Activated CD4-positive, alpha-beta T cell treated with anti-CD3 and anti-CD28 coated beads for 36 hours (primary cell): ENCODE measurements at regions of chr1 and their contacts with region 1.

Region 1: DNA sequence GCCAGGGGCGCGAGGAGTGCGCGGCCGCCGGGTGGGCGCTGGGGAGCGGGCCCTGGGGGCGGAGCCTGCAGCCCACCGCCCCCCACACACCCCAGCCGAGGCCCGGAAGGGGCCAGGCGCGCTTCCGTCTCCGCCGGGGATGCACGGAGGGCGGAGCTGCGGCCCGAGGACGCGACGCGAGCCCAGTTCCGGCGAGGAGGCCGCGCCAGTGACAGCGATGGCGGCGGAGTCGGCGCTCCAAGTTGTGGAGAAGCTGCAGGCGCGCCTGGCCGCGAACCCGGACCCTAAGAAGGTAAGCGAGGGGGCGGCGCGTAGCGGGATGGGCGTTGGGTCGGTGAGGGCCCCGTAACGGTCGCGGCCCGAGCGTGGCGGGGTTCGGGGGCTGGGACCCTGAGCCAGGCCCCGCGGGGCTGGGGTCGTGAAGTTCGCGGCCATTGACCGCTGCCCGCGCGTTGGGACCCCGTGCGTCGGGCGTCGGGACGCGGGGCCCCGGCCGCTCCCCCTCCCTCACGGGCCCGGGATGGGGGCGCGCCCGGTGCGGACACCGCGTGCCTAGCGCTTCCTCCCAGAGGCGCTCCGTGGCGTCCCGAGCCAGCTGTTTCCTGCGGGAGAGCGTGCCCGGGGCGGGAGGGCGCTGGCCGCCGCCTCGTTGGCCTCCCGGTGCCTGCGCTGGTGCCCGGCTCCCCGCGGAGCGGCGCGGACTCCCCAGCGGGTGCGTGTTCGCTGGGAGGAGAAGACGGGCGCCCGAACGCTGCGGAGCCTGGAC is at the start of gene ELOA:
- DNase-seq: peak; percentile 88
- ATAC-seq: peak; percentile 94
- H3K4me3 Mint-ChIP-seq: peak within 1 kb of the TSS; percentile 87
- H3K27ac Mint-ChIP-seq: peak within 1 kb of the TSS; percentile 91
- H3K4me1 Mint-ChIP-seq: peaks cover 42% of the 10 kb centered on the region
- H3K27me3 Mint-ChIP-seq: no peaks in the 10 kb centered on the region
- total RNA-seq, gene ELOA: 34.5 to 38.6 TPM

Region 2: GRCh38 chr1:23530747-23531561 is 212.5 kb before region 1 on chr1 and contains the start of gene E2F2:
- CTCF ChIA-PET with region 1: no interaction called
- POLR2A ChIA-PET with region 1: no interaction called
- intact Hi-C with region 1: loop called in 1 of 2 experiments (anchors 2 kb)
- DNase-seq: peak; percentile 91
- ATAC-seq: peak; percentile 81
- H3K4me3 Mint-ChIP-seq: peak within 1 kb of the TSS; percentile 84
- H3K27ac Mint-ChIP-seq: peak within 1 kb of the TSS; percentile 95
- H3K4me1 Mint-ChIP-seq: peaks cover 68% of the 10 kb centered on the region
- H3K27me3 Mint-ChIP-seq: no peaks in the 10 kb centered on the region
- total RNA-seq, gene E2F2: 25.0 to 32.0 TPM

Region 3: DNA sequence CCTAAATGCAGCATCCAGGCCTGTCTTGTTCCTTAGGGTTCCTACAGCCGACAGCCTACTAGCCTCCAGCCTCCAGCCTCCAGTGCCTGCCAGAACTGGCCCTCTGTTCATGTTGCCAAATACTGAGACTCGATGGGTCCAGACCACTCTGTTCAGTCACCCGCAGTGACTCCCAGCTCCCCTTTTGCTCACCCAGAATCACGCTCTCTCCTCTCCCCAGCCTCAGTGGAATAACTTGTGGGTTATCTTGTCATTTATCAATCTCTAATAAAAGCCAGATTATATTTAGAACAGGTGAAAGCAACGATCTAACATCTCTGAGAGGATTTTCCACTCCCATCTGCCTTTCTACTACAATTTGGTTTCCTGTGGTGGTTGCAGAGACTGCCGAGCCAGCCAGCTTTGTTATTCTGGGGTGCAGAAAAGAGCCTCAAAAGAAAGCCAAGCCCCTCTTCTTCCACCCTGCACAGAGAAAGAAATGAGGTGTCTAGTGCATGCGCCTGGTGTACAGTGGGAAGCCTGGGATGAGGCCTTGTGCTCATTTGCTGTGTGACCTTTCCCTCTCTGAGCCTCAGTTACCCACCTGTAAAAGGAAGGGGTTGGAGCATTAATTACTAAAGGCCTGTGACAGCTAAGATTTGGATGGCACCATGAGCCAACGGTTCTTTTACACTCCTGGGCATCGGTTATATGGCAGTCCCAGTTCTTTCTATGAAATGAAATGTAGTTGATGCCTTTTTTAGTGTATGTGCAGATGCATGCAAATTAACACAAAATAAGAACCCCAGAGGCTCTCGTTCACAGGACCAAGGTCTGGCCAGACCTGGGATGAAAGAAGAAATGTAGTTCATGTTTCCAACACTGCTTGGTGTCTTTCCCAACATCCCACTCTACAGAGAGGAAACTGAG is 141.2 kb before region 1 on chr1:
- CTCF ChIA-PET with region 1: no interaction called
- POLR2A ChIA-PET with region 1: no interaction called
- intact Hi-C with region 1: no loop called
- DNase-seq: no peak
- ATAC-seq: peak; percentile 11
- H3K4me3 Mint-ChIP-seq: peak overlapping the region; percentile 44
- H3K27ac Mint-ChIP-seq: peak overlapping the region; percentile 79
- H3K4me1 Mint-ChIP-seq: peaks cover 77% of the 10 kb centered on the region
- H3K27me3 Mint-ChIP-seq: no peaks in the 10 kb centered on the region

Region 4: DNA sequence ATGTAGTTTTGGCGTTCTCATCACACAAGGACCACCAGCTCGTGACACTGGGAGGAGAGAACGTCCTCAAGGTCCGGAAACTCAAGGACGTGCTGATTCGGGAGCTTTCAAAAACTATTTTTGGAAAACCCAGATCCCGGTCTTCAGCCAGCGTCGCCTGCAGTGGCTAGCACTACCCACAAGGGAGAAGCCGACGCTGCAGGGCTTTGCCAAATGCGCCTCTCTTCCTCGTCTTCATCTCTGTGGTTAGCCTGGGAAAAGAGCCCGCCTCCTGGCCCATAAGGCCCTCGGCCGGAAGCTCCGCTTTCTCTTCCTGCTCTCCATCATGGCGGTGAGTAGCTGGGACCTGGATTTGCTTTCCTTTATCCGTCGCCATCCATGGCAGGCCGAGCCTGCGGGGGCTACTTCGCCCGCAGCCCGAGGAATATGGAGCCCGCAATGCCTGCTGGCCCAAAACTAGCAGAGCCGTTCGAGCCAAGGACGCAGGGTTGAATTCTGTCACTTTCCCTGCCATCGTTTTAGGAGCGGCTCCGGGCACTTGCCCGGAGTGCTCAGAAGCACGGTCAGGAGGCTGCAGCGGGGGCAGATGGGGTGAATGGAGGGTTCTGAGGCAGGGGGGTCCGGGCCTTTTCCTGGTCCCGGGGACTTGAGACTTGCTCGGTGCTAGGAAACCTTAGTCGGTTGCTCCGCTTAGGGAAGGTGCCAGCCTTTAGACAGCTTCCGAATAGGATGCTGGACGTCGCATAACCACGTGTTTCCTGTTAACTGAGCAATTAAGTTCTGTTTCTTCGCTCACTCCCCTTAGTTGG is 51.8 kb before region 1 on chr1 and contains the start of gene RPL11:
- CTCF ChIA-PET with region 1: interaction called, 23 read pairs
- POLR2A ChIA-PET with region 1: interaction called, 14 read pairs
- intact Hi-C with region 1: loop called in 1 of 2 experiments (anchors 1 kb)
- DNase-seq: peak; percentile 93
- ATAC-seq: peak; percentile 98
- H3K4me3 Mint-ChIP-seq: peak within 1 kb of the TSS; percentile 97
- H3K27ac Mint-ChIP-seq: peak within 1 kb of the TSS; percentile 98
- H3K4me1 Mint-ChIP-seq: peaks cover 43% of the 10 kb centered on the region
- H3K27me3 Mint-ChIP-seq: peaks cover under 1% of the 10 kb centered on the region
- total RNA-seq, gene RPL11: 1,003 to 1,481 TPM

Region 5: DNA sequence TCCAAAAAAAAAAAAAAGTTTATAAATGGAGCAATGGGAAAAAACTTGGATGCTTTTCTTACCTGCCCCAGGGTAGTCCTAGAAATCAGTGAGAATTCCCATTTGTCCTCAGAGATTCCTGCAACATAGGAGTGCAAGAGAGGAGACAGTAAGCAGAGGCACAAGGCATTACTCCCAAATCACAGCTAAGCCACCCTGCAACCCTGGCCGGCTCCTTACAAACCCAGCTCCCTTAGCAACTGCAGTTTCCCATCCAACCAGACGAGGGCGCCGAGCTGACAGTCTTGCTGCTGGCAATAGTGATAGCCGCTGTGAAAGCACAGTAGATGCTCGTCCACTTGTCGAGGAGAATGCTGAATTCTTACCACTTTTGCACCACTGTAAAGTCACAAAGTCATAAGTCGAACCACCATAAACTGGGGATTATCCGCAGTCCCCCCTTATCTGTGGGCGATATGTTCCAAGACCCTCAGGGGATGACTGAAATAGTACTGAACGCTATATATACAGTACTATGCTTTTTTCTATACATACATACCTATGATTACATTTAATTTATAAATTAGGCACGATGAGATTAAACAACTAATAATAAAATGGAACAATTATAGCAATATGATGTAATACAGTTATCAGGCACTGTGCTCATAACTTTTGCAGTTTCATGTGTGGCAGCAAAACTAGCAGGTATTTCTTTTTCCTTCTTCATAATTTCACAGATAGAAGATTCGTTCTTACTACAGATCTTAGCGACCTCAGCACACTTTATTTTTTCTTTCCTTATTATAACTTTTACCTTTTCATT is 28.8 kb after region 1 on chr1:
- CTCF ChIA-PET with region 1: interaction called, 17 read pairs
- POLR2A ChIA-PET with region 1: interaction called, 3 read pairs
- intact Hi-C with region 1: loop called in 1 of 2 experiments (anchors 1 kb)
- DNase-seq: peak; percentile 94
- ATAC-seq: peak; percentile 95
- H3K4me3 Mint-ChIP-seq: no peak overlapping the region
- H3K27ac Mint-ChIP-seq: no peak overlapping the region
- H3K4me1 Mint-ChIP-seq: peaks cover 22% of the 10 kb centered on the region
- H3K27me3 Mint-ChIP-seq: no peaks in the 10 kb centered on the region

Region 6: GRCh38 chr1:23790696-23791515 is 47.4 kb after region 1 on chr1 and contains the start of gene LYPLA2:
- CTCF ChIA-PET with region 1: interaction called, 3 read pairs
- POLR2A ChIA-PET with region 1: no interaction called
- intact Hi-C with region 1: loop called in 1 of 2 experiments (anchors 1 kb)
- DNase-seq: peak; percentile 95
- ATAC-seq: peak; percentile 93
- H3K4me3 Mint-ChIP-seq: peak within 1 kb of the TSS; percentile 86
- H3K27ac Mint-ChIP-seq: peak within 1 kb of the TSS; percentile 79
- H3K4me1 Mint-ChIP-seq: peaks cover 13% of the 10 kb centered on the region
- H3K27me3 Mint-ChIP-seq: no peaks in the 10 kb centered on the region
- total RNA-seq, gene LYPLA2: 55.0 to 64.8 TPM

Region 7: GRCh38 chr1:23867953-23868556 is 124.6 kb after region 1 on chr1 and contains the start of gene FUCA1:
- CTCF ChIA-PET with region 1: interaction called, 4 read pairs
- POLR2A ChIA-PET with region 1: no interaction called
- intact Hi-C with region 1: loop called in 1 of 2 experiments (anchors 1 kb)
- DNase-seq: peak; percentile 95
- ATAC-seq: peak; percentile 97
- H3K4me3 Mint-ChIP-seq: peak within 1 kb of the TSS; percentile 76
- H3K27ac Mint-ChIP-seq: peak within 1 kb of the TSS; percentile 77
- H3K4me1 Mint-ChIP-seq: peaks cover 19% of the 10 kb centered on the region
- H3K27me3 Mint-ChIP-seq: no peaks in the 10 kb centered on the region
- total RNA-seq, gene FUCA1: 4.2 to 4.5 TPM